Ascending aorta (tissue), 2 donors: ENCODE measurements at regions of chr4 and their contacts with region 1.

Region 1: GRCh38 chr4:22410645-22411247 is 105.1 kb downstream of the ADGRA3 start:
- DNase-seq: no peak
- H3K4me3 ChIP-seq: no peak overlapping the region
- H3K27ac ChIP-seq: no peak overlapping the region
- H3K4me1 ChIP-seq: no peaks in the 10 kb centered on the region
- H3K27me3 ChIP-seq: no peaks in the 10 kb centered on the region
- CTCF ChIP-seq: peak in 2 of 3 experiments; percentile 56 to 64

Region 2: GRCh38 chr4:22515145-22515887 is 104.6 kb after region 1 on chr4:
- intact Hi-C with region 1: loop called (anchors 5 kb)
- DNase-seq: peak in 1 of 2 donors; percentile 77
- H3K4me3 ChIP-seq: peak overlapping the region; percentile 54 to 74
- H3K27ac ChIP-seq: peak overlapping the region; percentile 65 to 78
- H3K4me1 ChIP-seq: peaks cover 0 to 3% of the 10 kb centered on the region in 2 donors
- H3K27me3 ChIP-seq: no peaks in the 10 kb centered on the region
- CTCF ChIP-seq: no peak

Region 3: GRCh38 chr4:22607382-22607781 is 196.6 kb after region 1 on chr4:
- intact Hi-C with region 1: loop called (anchors 1 kb)
- DNase-seq: no peak
- H3K4me3 ChIP-seq: no peak overlapping the region
- H3K27ac ChIP-seq: no peak overlapping the region
- H3K4me1 ChIP-seq: no peaks in the 10 kb centered on the region
- H3K27me3 ChIP-seq: no peaks in the 10 kb centered on the region
- CTCF ChIP-seq: peak; percentile 13 to 63 (median 57)

Region 4: GRCh38 chr4:22688236-22688635 is 277.5 kb after region 1 on chr4:
- intact Hi-C with region 1: loop called (anchors 1 kb)
- DNase-seq: no peak
- H3K4me3 ChIP-seq: no peak overlapping the region
- H3K27ac ChIP-seq: no peak overlapping the region
- H3K4me1 ChIP-seq: no peaks in the 10 kb centered on the region
- H3K27me3 ChIP-seq: no peaks in the 10 kb centered on the region
- CTCF ChIP-seq: no peak